ENCODE measurements at regions of chrX and their contacts with region 1.

Region 1: DNA sequence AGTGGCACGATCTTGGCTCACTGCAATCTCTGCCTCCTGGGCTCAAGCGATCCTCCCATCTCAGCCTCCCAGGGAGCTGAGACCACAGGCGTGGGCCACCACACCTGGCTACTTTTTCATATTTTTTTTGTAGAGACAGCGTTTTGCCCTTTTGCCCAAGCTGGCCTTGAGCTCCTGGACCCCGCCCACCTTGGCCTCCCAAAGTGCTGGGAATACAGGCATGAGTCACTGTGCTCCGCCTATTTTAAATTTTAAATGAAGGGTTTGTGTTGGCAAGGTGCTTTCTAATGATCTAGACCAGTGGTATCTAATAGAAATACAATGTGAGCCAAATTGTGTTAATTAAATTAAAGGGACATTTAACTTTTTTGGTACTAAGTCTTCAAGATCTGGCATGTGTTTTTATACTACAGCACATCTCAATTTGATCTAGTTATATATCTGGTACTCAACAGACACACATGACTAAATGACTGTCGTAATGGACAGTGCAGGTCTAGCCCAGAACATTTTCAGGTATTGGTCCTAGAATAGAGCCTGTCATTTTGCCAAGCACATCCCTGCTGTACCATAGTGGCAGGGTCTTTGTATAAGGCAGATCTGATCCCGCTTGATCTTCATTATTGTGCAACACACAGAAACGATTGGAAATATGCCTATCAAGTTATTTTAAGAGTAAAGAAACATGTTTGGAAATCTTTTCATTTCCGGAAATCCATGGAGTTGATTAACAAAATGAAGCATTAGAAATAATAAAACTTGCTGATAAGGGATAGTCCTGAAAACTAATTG is 7.3 kb downstream of the PGK1 start:
- DNase-seq: no peak

Region 2: GRCh38 chrX:79408623-79409322 is 1297.4 kb after region 1 on chrX:
- intact Hi-C with region 1: loop called in 1 of 2 experiments (anchors 5 kb)
- DNase-seq: no peak